Right cardiac atrium (tissue), 5 donors: ENCODE measurements at regions of chr18 and their contacts with region 1.

Region 1: GRCh38 chr18:63025251-63026090 is 294.1 kb downstream of the BCL2 start:
- DNase-seq: no peak
- ATAC-seq: peak; percentile 28 to 45
- H3K4me3 ChIP-seq: no peak overlapping the region
- H3K27ac ChIP-seq: no peak overlapping the region
- H3K4me1 ChIP-seq: no peaks in the 10 kb centered on the region
- H3K27me3 ChIP-seq: no peaks in the 10 kb centered on the region

Region 2: DNA sequence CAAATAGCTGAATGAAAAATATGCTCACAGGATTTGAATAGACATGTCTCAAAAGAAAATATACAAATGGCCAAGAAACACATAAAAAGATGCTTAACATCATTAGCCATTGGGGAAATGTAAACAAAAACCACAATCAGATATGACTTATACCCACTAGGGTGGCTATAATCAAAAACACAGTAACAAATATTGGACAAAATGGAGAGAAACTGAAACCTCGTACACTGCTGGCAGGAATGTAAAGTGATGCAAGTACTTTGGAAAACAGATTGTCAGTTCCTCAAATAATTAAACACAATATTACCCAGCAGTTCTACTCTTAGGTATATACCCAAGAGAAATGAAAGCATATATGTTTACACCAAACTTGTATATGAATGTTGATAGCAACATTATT is 97.1 kb before region 1 on chr18:
- intact Hi-C with region 1: no loop called
- DNase-seq: no peak
- ATAC-seq: no peak
- H3K4me3 ChIP-seq: no peak overlapping the region
- H3K27ac ChIP-seq: no peak overlapping the region
- H3K4me1 ChIP-seq: no peaks in the 10 kb centered on the region
- H3K27me3 ChIP-seq: no peaks in the 10 kb centered on the region

Region 3: GRCh38 chr18:63155169-63155852 is 129.8 kb after region 1 on chr18:
- intact Hi-C with region 1: loop called in 2 of 4 experiments (anchors 10 kb)
- DNase-seq: peak; percentile 54 to 81 (median 78)
- ATAC-seq: peak; percentile 75 to 83
- H3K4me3 ChIP-seq: peak overlapping the region; percentile 0
- H3K27ac ChIP-seq: no peak overlapping the region
- H3K4me1 ChIP-seq: no peaks in the 10 kb centered on the region
- H3K27me3 ChIP-seq: no peaks in the 10 kb centered on the region